Mammary epithelial cell (primary cell): ENCODE measurements at regions of chr13 and their contacts with region 1.

Region 1: DNA sequence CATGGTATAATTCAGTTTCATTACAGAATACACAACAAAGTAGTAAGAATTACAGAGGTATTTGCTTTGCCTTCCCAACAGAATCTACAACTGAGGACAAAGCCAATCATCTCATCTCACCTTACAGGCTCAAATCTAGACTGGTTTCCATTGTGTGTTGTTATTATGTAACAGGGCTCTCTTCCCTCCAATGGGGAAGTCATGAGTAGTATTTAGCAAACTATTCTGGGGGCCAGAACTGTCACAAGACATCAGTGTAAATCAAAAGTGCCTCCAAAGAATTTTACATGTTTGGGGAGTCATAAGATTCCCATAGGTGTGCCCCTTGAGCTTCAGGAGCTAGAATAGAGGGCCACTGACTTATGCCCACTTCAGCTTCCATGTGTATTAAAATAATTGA is 187.0 kb upstream of the EDNRB start:
- DNase-seq: no peak
- H3K4me3 ChIP-seq: no peak overlapping the region
- H3K27ac ChIP-seq: no peak overlapping the region
- H3K4me1 ChIP-seq: no peaks in the 10 kb centered on the region
- H3K27me3 ChIP-seq: no peaks in the 10 kb centered on the region
- CTCF ChIP-seq: no peak

Region 2: DNA sequence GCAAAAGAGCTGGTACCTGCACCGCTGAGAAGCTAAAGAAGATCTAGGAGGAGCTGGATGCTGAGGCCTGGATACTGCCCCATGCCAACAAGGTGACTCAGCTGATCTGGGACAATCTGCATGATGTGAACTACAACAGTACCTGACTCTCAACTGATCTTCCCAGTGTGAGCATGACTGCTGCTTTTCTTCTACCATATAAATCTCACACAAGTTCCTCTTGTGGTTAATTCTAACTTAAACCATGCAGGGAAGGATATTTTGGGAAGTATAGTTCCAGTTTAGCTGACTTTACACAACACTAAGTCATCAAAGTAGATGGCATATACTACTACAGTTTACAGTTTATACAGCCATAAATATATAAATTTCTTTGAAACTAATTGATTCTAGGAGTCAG is 316.3 kb before region 1 on chr13:
- CTCF ChIA-PET with region 1: no interaction called
- dilution Hi-C with region 1: no loop called
- in situ Hi-C with region 1: loop called in 1 of 2 experiments (anchors 5 kb)
- intact Hi-C with region 1: no loop called
- DNase-seq: no peak
- H3K4me3 ChIP-seq: no peak overlapping the region
- H3K27ac ChIP-seq: no peak overlapping the region
- H3K4me1 ChIP-seq: no peaks in the 10 kb centered on the region
- H3K27me3 ChIP-seq: no peaks in the 10 kb centered on the region
- CTCF ChIP-seq: no peak

Region 3: GRCh38 chr13:78030341-78030896 is 75.2 kb before region 1 on chr13:
- CTCF ChIA-PET with region 1: no interaction called
- dilution Hi-C with region 1: no loop called
- in situ Hi-C with region 1: no loop called
- intact Hi-C with region 1: no loop called
- DNase-seq: no peak
- H3K4me3 ChIP-seq: no peak overlapping the region
- H3K27ac ChIP-seq: no peak overlapping the region
- H3K4me1 ChIP-seq: no peaks in the 10 kb centered on the region
- H3K27me3 ChIP-seq: no peaks in the 10 kb centered on the region
- CTCF ChIP-seq: no peak